Left ventricle myocardium superior (tissue), 1 donor: ENCODE measurements at regions of chr2 and their contacts with region 1.

Region 1: DNA sequence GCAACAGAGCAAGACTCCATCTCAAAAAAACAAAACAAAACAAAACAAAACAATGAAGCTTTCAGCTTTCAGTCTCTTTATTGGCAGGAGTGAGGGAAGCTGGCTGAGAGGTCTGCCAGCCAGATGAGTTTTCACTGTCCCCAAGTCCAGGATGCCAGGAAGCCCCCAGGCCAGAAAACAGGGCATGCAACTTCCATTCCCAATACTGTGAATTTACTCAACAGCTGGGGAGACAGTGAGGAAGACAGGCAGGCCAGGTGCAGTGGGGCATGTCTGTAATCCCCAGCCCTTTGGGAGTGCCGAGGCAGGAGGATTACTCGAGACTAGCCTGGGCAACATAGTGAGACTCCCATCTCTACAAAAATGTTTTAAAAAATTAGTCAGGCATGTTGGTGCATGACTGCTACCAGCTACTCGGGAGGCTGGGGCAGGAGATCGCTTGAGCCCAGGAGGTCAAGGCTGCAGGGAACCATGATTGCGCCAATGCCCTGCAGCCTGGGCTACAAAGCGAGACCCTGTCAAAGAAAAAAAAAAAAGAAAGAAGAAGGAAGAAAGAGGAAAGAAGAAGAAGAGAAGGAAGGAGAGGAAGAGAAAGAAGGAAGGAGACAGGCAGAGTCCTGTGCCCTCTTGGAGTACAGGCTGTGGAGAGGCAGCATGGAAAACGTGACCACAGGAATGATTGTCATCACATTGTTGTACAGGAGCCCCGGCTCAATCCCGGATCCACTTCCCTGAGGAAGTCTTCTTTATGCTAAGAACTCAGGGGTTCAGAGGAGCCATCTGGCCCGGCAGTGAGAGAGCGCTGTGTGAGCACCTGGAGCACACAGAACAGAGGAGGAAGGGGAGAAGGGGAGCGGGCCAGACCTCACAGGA is 29.2 kb upstream of the POMC start:
- DNase-seq: no peak
- ATAC-seq: no peak

Region 2: DNA sequence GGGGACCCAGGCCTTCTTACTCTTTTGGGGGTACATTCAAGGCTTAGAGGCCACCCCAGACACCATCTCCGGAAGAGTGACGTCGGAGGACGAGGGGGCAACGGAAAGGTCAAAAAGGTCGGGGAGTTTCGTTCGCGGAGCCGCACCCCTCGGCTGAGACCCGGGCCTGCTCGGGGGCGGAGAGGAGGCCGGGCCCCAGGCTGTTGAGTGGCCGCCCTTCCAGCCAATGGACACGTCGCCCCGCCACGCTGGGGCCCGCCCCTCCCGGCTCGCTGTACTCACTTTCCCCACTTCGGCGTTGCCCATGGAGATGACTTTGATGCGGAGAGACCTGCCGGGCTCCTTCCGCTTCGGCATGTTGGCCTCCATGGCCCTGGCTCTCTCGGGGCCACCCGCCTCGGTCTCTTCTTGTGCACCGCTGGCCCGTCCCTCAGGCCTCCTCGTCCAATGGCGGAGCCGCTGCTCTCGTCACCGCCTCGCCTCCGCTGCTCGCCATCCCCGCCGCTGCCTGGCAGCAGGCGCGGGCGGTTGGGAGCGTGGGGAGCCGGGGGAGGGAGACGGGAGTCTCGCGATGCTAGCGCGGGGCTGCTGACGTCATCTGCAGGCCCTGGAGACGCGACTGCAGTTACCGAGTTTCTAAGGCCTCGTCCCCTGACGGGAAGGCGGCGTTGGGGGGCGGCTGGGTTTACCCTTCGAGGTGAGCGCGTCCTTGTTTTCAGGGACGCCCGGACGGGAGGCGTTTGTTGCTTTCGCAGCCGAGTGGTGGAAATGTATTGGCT is 225.8 kb before region 1 on chr2 and contains the start of gene DNAJC27:
- intact Hi-C with region 1: loop called (anchors 10 kb)
- DNase-seq: peak; percentile 99
- ATAC-seq: peak; percentile 95
- total RNA-seq, gene DNAJC27: 8.6 TPM

Region 3: GRCh38 chr2:25473758-25474340 is 276.3 kb after region 1 on chr2:
- intact Hi-C with region 1: no loop called
- DNase-seq: peak; percentile 42
- ATAC-seq: no peak